Naive thymus-derived CD4-positive, alpha-beta T cell (primary cell): ENCODE measurements at regions of chr19 and their contacts with region 1.

Region 1: GRCh38 chr19:41353466-41354342 is at the start of gene TGFB1:
- DNase-seq: peak; percentile 89 to 94 (median 92)
- ATAC-seq: peak; percentile 85
- H3K4me3 ChIP-seq: peak within 1 kb of the TSS; percentile 94
- H3K4me3 Mint-ChIP-seq: peak within 1 kb of the TSS; percentile 92 to 100 (median 98)
- H3K27ac ChIP-seq: peak within 1 kb of the TSS; percentile 96
- H3K27ac Mint-ChIP-seq: peak within 1 kb of the TSS; percentile 94 to 100 (median 98)
- H3K4me1 ChIP-seq: peaks cover 44 to 70% of the 10 kb centered on the region in 2 donors
- H3K4me1 Mint-ChIP-seq: peaks cover 56 to 71% (median 59%) of the 10 kb centered on the region in 7 donors
- H3K27me3 ChIP-seq: no peaks in the 10 kb centered on the region
- H3K27me3 Mint-ChIP-seq: no peaks in the 10 kb centered on the region
- total RNA-seq, gene TGFB1: 91.2 to 322 (median 185) TPM

Region 2: GRCh38 chr19:40609561-40610395 is 743.9 kb before region 1 on chr19:
- CTCF ChIA-PET with region 1: no interaction called
- POLR2A ChIA-PET with region 1: no interaction called
- intact Hi-C with region 1: loop called in 1 of 2 experiments (anchors 5 kb)
- DNase-seq: peak; percentile 67 to 96 (median 78)
- ATAC-seq: peak; percentile 64
- H3K4me3 ChIP-seq: peak overlapping the region; percentile 63
- H3K4me3 Mint-ChIP-seq: peak overlapping the region; percentile 75 to 92 (median 86)
- H3K27ac ChIP-seq: peak overlapping the region; percentile 74
- H3K27ac Mint-ChIP-seq: peak overlapping the region; percentile 89 to 100 (median 92)
- H3K4me1 ChIP-seq: peaks cover 35 to 45% of the 10 kb centered on the region in 2 donors
- H3K4me1 Mint-ChIP-seq: peaks cover 20 to 78% (median 63%) of the 10 kb centered on the region in 7 donors
- H3K27me3 ChIP-seq: no peaks in the 10 kb centered on the region
- H3K27me3 Mint-ChIP-seq: peaks cover 0 to 8% (median 0%) of the 10 kb centered on the region in 5 donors

Region 3: DNA sequence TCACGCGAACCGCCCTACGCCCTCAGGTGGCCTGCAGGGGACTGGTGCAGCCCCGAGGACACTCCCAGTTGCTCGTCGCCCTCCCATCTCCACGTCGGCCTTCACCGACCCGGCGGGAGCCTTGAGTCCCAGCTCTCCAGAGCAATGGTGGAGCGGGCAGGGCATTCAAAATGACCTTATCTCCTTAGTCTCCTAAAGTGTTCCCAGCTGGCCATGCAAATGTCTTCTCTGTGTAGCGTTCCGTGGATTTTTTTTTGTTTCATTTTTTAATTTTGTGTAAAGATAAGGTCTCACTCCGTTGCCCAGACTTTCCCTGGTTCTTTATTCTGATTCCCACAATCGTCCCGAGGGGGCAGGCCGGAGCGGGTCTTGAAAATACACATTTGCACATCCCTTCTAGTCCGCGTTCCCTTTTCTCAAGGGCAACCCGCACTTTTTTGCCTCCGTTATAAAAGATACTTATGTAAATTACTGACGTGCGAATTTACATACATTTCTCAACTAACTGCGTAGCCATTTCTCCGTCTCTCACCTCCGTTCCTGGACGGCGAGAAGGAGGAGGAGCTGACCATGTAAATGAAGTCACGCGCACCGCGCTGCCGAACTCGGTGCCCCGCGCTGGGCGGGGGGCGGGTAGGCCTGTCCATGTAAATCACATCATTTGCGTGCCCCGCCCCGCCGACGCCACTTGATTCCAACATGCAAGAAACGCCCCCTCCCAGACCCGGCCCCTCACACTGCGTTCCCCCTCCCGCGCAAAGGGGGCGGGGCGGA is 555.3 kb before region 1 on chr19:
- CTCF ChIA-PET with region 1: no interaction called
- POLR2A ChIA-PET with region 1: no interaction called
- intact Hi-C with region 1: loop called in 1 of 2 experiments (anchors 5 kb)
- DNase-seq: peak; percentile 48 to 100 (median 100)
- ATAC-seq: peak; percentile 92
- H3K4me3 ChIP-seq: peak overlapping the region; percentile 77
- H3K4me3 Mint-ChIP-seq: peak overlapping the region; percentile 89 to 100 (median 95)
- H3K27ac ChIP-seq: peak overlapping the region; percentile 90
- H3K27ac Mint-ChIP-seq: peak overlapping the region; percentile 96 to 100 (median 99)
- H3K4me1 ChIP-seq: peaks cover 35 to 39% of the 10 kb centered on the region in 2 donors
- H3K4me1 Mint-ChIP-seq: peaks cover 28 to 56% (median 48%) of the 10 kb centered on the region in 7 donors
- H3K27me3 ChIP-seq: no peaks in the 10 kb centered on the region
- H3K27me3 Mint-ChIP-seq: no peaks in the 10 kb centered on the region

Region 4: DNA sequence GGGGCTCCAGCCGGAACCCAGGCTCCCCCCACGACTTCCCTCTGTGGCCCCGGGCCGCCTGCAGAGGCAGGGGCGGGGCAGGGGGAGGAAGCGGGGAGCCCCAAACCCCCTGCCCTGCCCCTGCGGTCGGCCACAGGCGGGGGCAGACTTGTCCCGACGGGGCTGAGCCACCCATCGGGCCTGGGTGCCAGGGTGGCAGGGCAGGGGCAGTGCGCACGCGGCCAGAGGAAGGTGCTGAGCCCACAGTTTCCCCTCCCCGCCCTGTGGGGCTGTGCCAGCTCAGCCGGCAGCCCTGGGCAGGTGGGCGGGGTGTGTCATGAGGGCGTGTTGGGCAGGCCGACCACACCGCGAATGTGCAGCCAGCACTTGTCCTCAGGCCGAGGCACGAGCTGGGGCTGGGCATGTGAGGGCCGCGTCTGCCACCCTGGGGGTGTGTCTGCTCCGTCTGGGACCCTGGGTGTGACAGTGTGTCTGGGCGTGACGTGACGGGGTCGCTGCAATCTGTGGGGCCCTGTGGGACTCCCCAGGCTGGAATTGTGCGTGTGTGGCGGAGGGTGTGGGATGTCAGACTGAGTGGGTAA is 26.0 kb before region 1 on chr19:
- CTCF ChIA-PET with region 1: interaction called, 9 read pairs
- POLR2A ChIA-PET with region 1: interaction called, 51 read pairs
- intact Hi-C with region 1: loop called (anchors 1 kb)
- DNase-seq: peak; percentile 57 to 95 (median 66)
- ATAC-seq: peak; percentile 75
- H3K4me3 ChIP-seq: peak overlapping the region; percentile 42
- H3K4me3 Mint-ChIP-seq: peak overlapping the region; percentile 74 to 88 (median 82)
- H3K27ac ChIP-seq: peak overlapping the region; percentile 85
- H3K27ac Mint-ChIP-seq: peak overlapping the region; percentile 86 to 99 (median 94)
- H3K4me1 ChIP-seq: peaks cover 36 to 57% of the 10 kb centered on the region in 2 donors
- H3K4me1 Mint-ChIP-seq: peaks cover 59 to 77% (median 68%) of the 10 kb centered on the region in 7 donors
- H3K27me3 ChIP-seq: no peaks in the 10 kb centered on the region
- H3K27me3 Mint-ChIP-seq: no peaks in the 10 kb centered on the region

Region 5: GRCh38 chr19:41397086-41398049 is 43.7 kb after region 1 on chr19 and contains the starts of genes BCKDHA and EXOSC5:
- CTCF ChIA-PET with region 1: no interaction called
- POLR2A ChIA-PET with region 1: interaction called, 12 read pairs
- intact Hi-C with region 1: loop called (anchors 1 kb)
- DNase-seq: peak; percentile 96 to 100 (median 99)
- ATAC-seq: peak; percentile 99
- H3K4me3 ChIP-seq: peak within 1 kb of the TSS; percentile 96
- H3K4me3 Mint-ChIP-seq: peak within 1 kb of the TSS; percentile 95 to 99 (median 98)
- H3K27ac ChIP-seq: peak within 1 kb of the TSS; percentile 89
- H3K27ac Mint-ChIP-seq: peak within 1 kb of the TSS; percentile 99 to 100 (median 100)
- H3K4me1 ChIP-seq: peaks cover 19 to 23% of the 10 kb centered on the region in 2 donors
- H3K4me1 Mint-ChIP-seq: peaks cover 33 to 61% (median 50%) of the 10 kb centered on the region in 7 donors
- H3K27me3 ChIP-seq: no peaks in the 10 kb centered on the region
- H3K27me3 Mint-ChIP-seq: no peaks in the 10 kb centered on the region
- total RNA-seq, gene BCKDHA: 19.4 to 25.0 (median 20.5) TPM
- total RNA-seq, gene EXOSC5: 15.0 to 37.5 (median 20.6) TPM

Region 6: GRCh38 chr19:41548954-41549688 is 195.4 kb after region 1 on chr19:
- CTCF ChIA-PET with region 1: interaction called, 3 read pairs
- POLR2A ChIA-PET with region 1: interaction called, 5 read pairs
- intact Hi-C with region 1: loop called in 1 of 2 experiments (anchors 5 kb)
- DNase-seq: peak in 8 of 9 donors; percentile 68 to 82 (median 78)
- ATAC-seq: peak; percentile 82
- H3K4me3 ChIP-seq: peak overlapping the region; percentile 77
- H3K4me3 Mint-ChIP-seq: peak overlapping the region; percentile 91 to 100 (median 98)
- H3K27ac ChIP-seq: peak overlapping the region; percentile 88
- H3K27ac Mint-ChIP-seq: peak overlapping the region; percentile 92 to 97 (median 96)
- H3K4me1 ChIP-seq: peaks cover 43 to 53% of the 10 kb centered on the region in 2 donors
- H3K4me1 Mint-ChIP-seq: peaks cover 58 to 72% (median 61%) of the 10 kb centered on the region in 7 donors
- H3K27me3 ChIP-seq: no peaks in the 10 kb centered on the region
- H3K27me3 Mint-ChIP-seq: no peaks in the 10 kb centered on the region

Region 7: GRCh38 chr19:41587101-41587837 is 233.6 kb after region 1 on chr19:
- CTCF ChIA-PET with region 1: no interaction called
- POLR2A ChIA-PET with region 1: no interaction called
- intact Hi-C with region 1: no loop called
- DNase-seq: no peak
- ATAC-seq: no peak
- H3K4me3 ChIP-seq: no peak overlapping the region
- H3K4me3 Mint-ChIP-seq: no peak overlapping the region
- H3K27ac ChIP-seq: no peak overlapping the region
- H3K27ac Mint-ChIP-seq: no peak overlapping the region
- H3K4me1 ChIP-seq: no peaks in the 10 kb centered on the region
- H3K4me1 Mint-ChIP-seq: peaks cover 0 to 7% (median 0%) of the 10 kb centered on the region in 7 donors
- H3K27me3 ChIP-seq: no peaks in the 10 kb centered on the region
- H3K27me3 Mint-ChIP-seq: peaks cover 0 to 3% (median 0%) of the 10 kb centered on the region in 5 donors